ENCODE measurements at regions of chr1 and their contacts with region 1.

Region 1: GRCh38 chr1:31394628-31395193 is 18.3 kb upstream of the SERINC2 start:
- DNase-seq: peak; percentile 81
- H3K4me3 Mint-ChIP-seq: peak overlapping the region; percentile 74
- H3K27ac Mint-ChIP-seq: peak overlapping the region; percentile 25
- H3K4me1 Mint-ChIP-seq: peaks cover 12% of the 10 kb centered on the region
- H3K27me3 Mint-ChIP-seq: no peaks in the 10 kb centered on the region

Region 2: GRCh38 chr1:31372961-31373896 is 21.5 kb before region 1 on chr1 and contains the start of gene FABP3:
- CTCF ChIA-PET with region 1: interaction called, 25 read pairs
- POLR2A ChIA-PET with region 1: no interaction called
- DNase-seq: no peak
- H3K4me3 Mint-ChIP-seq: peak within 1 kb of the TSS; percentile 60
- H3K27ac Mint-ChIP-seq: peak within 1 kb of the TSS; percentile 31
- H3K4me1 Mint-ChIP-seq: peaks cover 11% of the 10 kb centered on the region
- H3K27me3 Mint-ChIP-seq: peaks cover 8% of the 10 kb centered on the region
- total RNA-seq, gene FABP3: not detected

Measured in activated CD4-positive, alpha-beta T cell treated with anti-CD3 and anti-CD28 coated beads, Interleukin-2, amount 10 ng/mL, durations not matched to agents 7 days and 5 days (primary cell).